CD4-positive, alpha-beta memory T cell (primary cell): ENCODE measurements at regions of chr2 and their contacts with region 1.

Region 1: GRCh38 chr2:9555297-9556141 is at the start of gene ADAM17:
- DNase-seq: peak; percentile 81 to 85 (median 82)
- H3K4me3 ChIP-seq: peak within 1 kb of the TSS; percentile 97 to 99
- H3K4me3 Mint-ChIP-seq: peak within 1 kb of the TSS; percentile 92 to 99 (median 98)
- H3K27ac ChIP-seq: peak within 1 kb of the TSS; percentile 90
- H3K27ac Mint-ChIP-seq: peak within 1 kb of the TSS; percentile 93 to 98 (median 98)
- H3K4me1 ChIP-seq: peaks cover 54% of the 10 kb centered on the region
- H3K4me1 Mint-ChIP-seq: peaks cover 32 to 56% (median 45%) of the 10 kb centered on the region in 4 donors
- H3K27me3 ChIP-seq: no peaks in the 10 kb centered on the region
- H3K27me3 Mint-ChIP-seq: no peaks in the 10 kb centered on the region
- total RNA-seq, gene ADAM17: 32.7 to 35.6 TPM

Region 2: GRCh38 chr2:9423100-9423921 is 132.2 kb before region 1 on chr2 and contains the starts of genes CPSF3 and ITGB1BP1:
- CTCF ChIA-PET with region 1: interaction called, 3 read pairs
- POLR2A ChIA-PET with region 1: interaction called, 13 read pairs
- intact Hi-C with region 1: loop called (anchors 1 kb)
- DNase-seq: peak; percentile 93 to 95 (median 94)
- H3K4me3 ChIP-seq: peak within 1 kb of the TSS; percentile 77 to 97
- H3K4me3 Mint-ChIP-seq: peak within 1 kb of the TSS in 5 of 8 donors; percentile 91 to 93 (median 91)
- H3K27ac ChIP-seq: peak within 1 kb of the TSS; percentile 88
- H3K27ac Mint-ChIP-seq: peak within 1 kb of the TSS in 6 of 7 donors; percentile 85 to 95 (median 94)
- H3K4me1 ChIP-seq: peaks cover 43% of the 10 kb centered on the region
- H3K4me1 Mint-ChIP-seq: peaks cover 24 to 30% (median 28%) of the 10 kb centered on the region in 4 donors
- H3K27me3 ChIP-seq: no peaks in the 10 kb centered on the region
- H3K27me3 Mint-ChIP-seq: no peaks in the 10 kb centered on the region
- total RNA-seq, gene CPSF3: 20.9 to 22.4 TPM
- total RNA-seq, gene ITGB1BP1: 55.1 to 55.8 TPM

Region 3: GRCh38 chr2:9594366-9595054 is 39.0 kb after region 1 on chr2:
- CTCF ChIA-PET with region 1: no interaction called
- POLR2A ChIA-PET with region 1: interaction called, 20 read pairs
- intact Hi-C with region 1: no loop called
- DNase-seq: no peak
- H3K4me3 ChIP-seq: no peak overlapping the region
- H3K4me3 Mint-ChIP-seq: peak overlapping the region in 6 of 8 donors; percentile 1 to 35 (median 16)
- H3K27ac ChIP-seq: peak overlapping the region; percentile 5
- H3K27ac Mint-ChIP-seq: peak overlapping the region; percentile 2 to 80 (median 52)
- H3K4me1 ChIP-seq: peaks cover 50% of the 10 kb centered on the region
- H3K4me1 Mint-ChIP-seq: peaks cover 38 to 68% (median 54%) of the 10 kb centered on the region in 4 donors
- H3K27me3 ChIP-seq: no peaks in the 10 kb centered on the region
- H3K27me3 Mint-ChIP-seq: no peaks in the 10 kb centered on the region

Region 4: GRCh38 chr2:9703085-9703641 is 147.6 kb after region 1 on chr2:
- CTCF ChIA-PET with region 1: interaction called, 4 read pairs
- POLR2A ChIA-PET with region 1: interaction called, 18 read pairs
- intact Hi-C with region 1: loop called (anchors 5 kb)
- DNase-seq: peak; percentile 89 to 98 (median 94)
- H3K4me3 ChIP-seq: no peak overlapping the region
- H3K4me3 Mint-ChIP-seq: peak overlapping the region in 7 of 8 donors; percentile 11 to 80 (median 55)
- H3K27ac ChIP-seq: peak overlapping the region; percentile 88
- H3K27ac Mint-ChIP-seq: peak overlapping the region; percentile 94 to 98 (median 97)
- H3K4me1 ChIP-seq: peaks cover 50% of the 10 kb centered on the region
- H3K4me1 Mint-ChIP-seq: peaks cover 35 to 83% (median 52%) of the 10 kb centered on the region in 4 donors
- H3K27me3 ChIP-seq: no peaks in the 10 kb centered on the region
- H3K27me3 Mint-ChIP-seq: no peaks in the 10 kb centered on the region

Region 5: DNA sequence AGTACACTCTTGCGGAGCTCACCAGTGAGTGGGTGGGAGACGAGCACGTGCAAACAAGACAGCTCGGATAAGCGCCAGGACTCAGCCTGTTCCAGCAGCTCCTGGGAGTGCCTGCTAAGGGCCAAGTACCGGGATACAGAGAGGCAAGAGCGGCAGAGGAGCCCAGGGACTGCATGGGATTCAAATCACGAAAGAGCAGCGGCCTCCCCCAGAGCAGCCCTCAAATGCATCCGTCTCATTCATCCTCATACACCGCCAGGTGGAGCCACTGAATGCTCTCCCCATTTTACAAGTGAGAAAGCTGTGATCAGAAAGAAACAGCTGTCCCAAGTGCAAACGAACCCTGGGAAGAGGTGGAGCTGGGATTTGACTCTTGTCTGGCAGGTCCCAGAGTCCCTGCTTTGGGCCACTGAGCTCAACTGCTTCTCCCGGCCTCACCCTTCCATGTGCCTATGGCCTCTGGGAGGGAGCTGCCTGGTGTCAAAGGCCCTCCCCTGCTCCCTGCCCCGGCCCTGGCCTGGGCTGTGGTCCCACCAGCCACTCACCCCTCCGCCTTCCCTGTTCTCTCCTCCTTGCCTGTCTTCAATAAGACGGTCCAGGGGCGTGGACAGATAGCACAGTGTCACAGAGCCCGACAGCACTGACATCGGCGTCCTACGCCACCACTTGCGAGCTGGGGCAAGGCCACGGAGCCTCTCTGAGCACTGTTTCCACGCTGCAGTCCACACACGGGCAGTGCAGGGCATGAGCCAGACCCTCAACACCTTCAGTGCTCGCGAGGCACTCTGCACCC is 215.0 kb after region 1 on chr2:
- CTCF ChIA-PET with region 1: interaction called, 5 read pairs
- POLR2A ChIA-PET with region 1: interaction called, 11 read pairs
- intact Hi-C with region 1: no loop called
- DNase-seq: peak; percentile 49 to 63 (median 58)
- H3K4me3 ChIP-seq: no peak overlapping the region
- H3K4me3 Mint-ChIP-seq: peak overlapping the region in 1 of 8 donors; percentile 55
- H3K27ac ChIP-seq: no peak overlapping the region
- H3K27ac Mint-ChIP-seq: peak overlapping the region in 5 of 7 donors; percentile 15 to 88 (median 46)
- H3K4me1 ChIP-seq: peaks cover 20% of the 10 kb centered on the region
- H3K4me1 Mint-ChIP-seq: peaks cover 3 to 21% (median 13%) of the 10 kb centered on the region in 4 donors
- H3K27me3 ChIP-seq: no peaks in the 10 kb centered on the region
- H3K27me3 Mint-ChIP-seq: no peaks in the 10 kb centered on the region

Region 6: GRCh38 chr2:9843229-9844035 is 287.9 kb after region 1 on chr2 and contains the start of gene TAF1B:
- CTCF ChIA-PET with region 1: no interaction called
- POLR2A ChIA-PET with region 1: interaction called, 12 read pairs
- intact Hi-C with region 1: no loop called
- DNase-seq: peak; percentile 82 to 84 (median 83)
- H3K4me3 ChIP-seq: peak within 1 kb of the TSS; percentile 85 to 92
- H3K4me3 Mint-ChIP-seq: peak within 1 kb of the TSS; percentile 91 to 97 (median 94)
- H3K27ac ChIP-seq: peak within 1 kb of the TSS; percentile 76
- H3K27ac Mint-ChIP-seq: peak within 1 kb of the TSS; percentile 82 to 97 (median 93)
- H3K4me1 ChIP-seq: peaks cover 41% of the 10 kb centered on the region
- H3K4me1 Mint-ChIP-seq: peaks cover 32 to 50% (median 40%) of the 10 kb centered on the region in 4 donors
- H3K27me3 ChIP-seq: no peaks in the 10 kb centered on the region
- H3K27me3 Mint-ChIP-seq: no peaks in the 10 kb centered on the region
- total RNA-seq, gene TAF1B: 23.5 to 23.9 TPM